B cell (primary cell): ENCODE measurements at regions of chr21 and their contacts with region 1.

Region 1: GRCh38 chr21:42233067-42233961 is 14.4 kb downstream of the ABCG1 start:
- DNase-seq: peak; percentile 91
- ATAC-seq: peak; percentile 56
- H3K4me3 ChIP-seq: peak overlapping the region; percentile 5 to 62 (median 16)
- H3K4me3 Mint-ChIP-seq: peak overlapping the region; percentile 82
- H3K27ac ChIP-seq: peak overlapping the region; percentile 93 to 98
- H3K27ac Mint-ChIP-seq: peak overlapping the region; percentile 93
- H3K4me1 ChIP-seq: peaks cover 78 to 92% of the 10 kb centered on the region in 2 donors
- H3K4me1 Mint-ChIP-seq: peaks cover 95% of the 10 kb centered on the region
- H3K27me3 ChIP-seq: no peaks in the 10 kb centered on the region
- H3K27me3 Mint-ChIP-seq: no peaks in the 10 kb centered on the region
- CTCF ChIP-seq: peak; percentile 69

Region 2: GRCh38 chr21:41879190-41879998 is 353.9 kb before region 1 on chr21 and contains the start of gene PRDM15:
- CTCF ChIA-PET with region 1: no interaction called
- POLR2A ChIA-PET with region 1: no interaction called
- intact Hi-C with region 1: loop called (anchors 2 kb)
- DNase-seq: peak; percentile 83
- ATAC-seq: peak; percentile 67
- H3K4me3 ChIP-seq: peak within 1 kb of the TSS; percentile 53 to 86 (median 81)
- H3K4me3 Mint-ChIP-seq: peak within 1 kb of the TSS; percentile 94
- H3K27ac ChIP-seq: peak within 1 kb of the TSS; percentile 76 to 80
- H3K27ac Mint-ChIP-seq: peak within 1 kb of the TSS; percentile 97
- H3K4me1 ChIP-seq: peaks cover 13 to 21% of the 10 kb centered on the region in 2 donors
- H3K4me1 Mint-ChIP-seq: peaks cover 35% of the 10 kb centered on the region
- H3K27me3 ChIP-seq: no peaks in the 10 kb centered on the region
- H3K27me3 Mint-ChIP-seq: no peaks in the 10 kb centered on the region
- CTCF ChIP-seq: no peak
- total RNA-seq, gene PRDM15: 20.7 and 21.3 TPM in 2 replicates

Region 3: DNA sequence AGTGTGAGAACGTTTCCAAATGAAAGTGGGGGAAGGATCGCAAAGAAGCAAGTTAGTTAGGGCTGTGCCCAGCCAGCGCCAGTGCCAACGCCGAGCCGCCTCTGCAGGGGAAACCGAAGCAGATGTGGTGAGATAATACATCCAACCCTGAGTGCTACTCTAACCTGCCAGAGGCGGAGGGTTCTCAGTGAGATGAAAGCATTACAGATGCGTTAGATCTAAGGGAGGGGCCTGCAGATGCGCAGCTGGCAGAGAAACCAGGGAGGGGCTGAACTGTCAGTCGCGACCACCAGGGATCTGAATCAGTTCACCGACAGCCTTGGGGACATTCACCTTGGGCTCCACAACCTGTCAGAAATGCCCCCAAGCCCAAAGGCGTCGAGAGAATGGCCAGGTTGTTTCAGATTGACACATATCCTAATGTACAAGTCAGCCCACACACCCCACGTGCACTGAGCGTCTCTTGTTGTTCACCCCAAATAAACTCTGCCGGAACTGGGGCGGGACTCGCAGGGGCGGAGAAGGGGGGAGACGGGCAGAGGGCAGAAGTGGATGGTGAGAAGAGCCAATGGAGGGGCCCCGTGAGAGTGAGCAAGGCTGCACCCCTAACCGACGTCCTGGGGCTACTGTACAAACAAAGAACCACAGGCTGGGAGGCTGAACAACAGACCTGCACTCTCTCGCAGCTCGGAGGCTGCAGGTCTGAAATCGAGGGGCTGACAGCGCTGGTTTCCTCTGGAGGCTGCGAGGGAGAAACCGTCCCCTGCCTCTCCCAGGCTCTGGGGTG is 170.9 kb before region 1 on chr21:
- CTCF ChIA-PET with region 1: no interaction called
- POLR2A ChIA-PET with region 1: no interaction called
- intact Hi-C with region 1: loop called (anchors 1 kb)
- DNase-seq: peak; percentile 94
- ATAC-seq: peak; percentile 73
- H3K4me3 ChIP-seq: peak overlapping the region; percentile 3 to 79 (median 65)
- H3K4me3 Mint-ChIP-seq: peak overlapping the region; percentile 91
- H3K27ac ChIP-seq: peak overlapping the region; percentile 87 to 96
- H3K27ac Mint-ChIP-seq: peak overlapping the region; percentile 99
- H3K4me1 ChIP-seq: peaks cover 64 to 95% of the 10 kb centered on the region in 2 donors
- H3K4me1 Mint-ChIP-seq: peaks cover 82% of the 10 kb centered on the region
- H3K27me3 ChIP-seq: no peaks in the 10 kb centered on the region
- H3K27me3 Mint-ChIP-seq: no peaks in the 10 kb centered on the region
- CTCF ChIP-seq: no peak

Region 4: GRCh38 chr21:42187976-42188653 is 45.2 kb before region 1 on chr21:
- CTCF ChIA-PET with region 1: interaction called, 5 read pairs
- POLR2A ChIA-PET with region 1: interaction called, 3 read pairs
- intact Hi-C with region 1: loop called (anchors 1 kb)
- DNase-seq: peak; percentile 85
- ATAC-seq: peak; percentile 97
- H3K4me3 ChIP-seq: peak overlapping the region in 3 of 5 experiments; percentile 11 to 32 (median 28)
- H3K4me3 Mint-ChIP-seq: peak overlapping the region; percentile 69
- H3K27ac ChIP-seq: peak overlapping the region; percentile 78 to 81
- H3K27ac Mint-ChIP-seq: peak overlapping the region; percentile 91
- H3K4me1 ChIP-seq: peaks cover 35 to 50% of the 10 kb centered on the region in 2 donors
- H3K4me1 Mint-ChIP-seq: peaks cover 50% of the 10 kb centered on the region
- H3K27me3 ChIP-seq: no peaks in the 10 kb centered on the region
- H3K27me3 Mint-ChIP-seq: no peaks in the 10 kb centered on the region
- CTCF ChIP-seq: no peak

Region 5: DNA sequence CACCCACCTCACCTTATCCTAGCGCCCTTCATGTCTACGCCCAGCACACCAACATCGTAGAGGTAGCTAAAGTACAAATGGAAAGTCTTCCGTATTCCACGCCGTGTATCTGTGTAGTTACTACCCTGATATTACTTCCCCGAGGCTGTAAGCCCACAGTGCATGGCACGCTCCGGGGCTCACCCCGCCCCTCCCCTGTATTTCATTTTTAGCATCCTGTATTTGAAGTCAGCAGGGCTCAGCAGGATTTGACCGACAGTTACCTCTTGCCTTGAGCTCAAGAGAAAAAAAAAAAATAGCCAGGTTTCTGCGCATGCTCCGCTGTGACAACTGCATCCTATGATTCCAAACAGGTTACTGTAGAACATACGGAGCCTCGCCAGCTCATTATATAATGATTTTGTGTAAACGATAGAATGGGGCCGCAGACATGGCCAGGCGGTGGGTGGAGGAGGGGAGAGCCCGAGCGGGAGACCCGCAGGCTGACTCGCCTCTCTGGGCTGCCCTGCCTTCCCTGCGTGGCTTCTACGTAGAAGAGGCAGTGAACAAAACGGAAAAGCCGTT is 13.1 kb before region 1 on chr21:
- CTCF ChIA-PET with region 1: interaction called, 36 read pairs
- POLR2A ChIA-PET with region 1: interaction called, 23 read pairs
- intact Hi-C with region 1: loop called (anchors 1 kb)
- DNase-seq: peak; percentile 94
- ATAC-seq: peak; percentile 85
- H3K4me3 ChIP-seq: peak overlapping the region; percentile 72 to 92 (median 89)
- H3K4me3 Mint-ChIP-seq: peak overlapping the region; percentile 87
- H3K27ac ChIP-seq: peak overlapping the region; percentile 75 to 96
- H3K27ac Mint-ChIP-seq: peak overlapping the region; percentile 80
- H3K4me1 ChIP-seq: peaks cover 29 to 41% of the 10 kb centered on the region in 2 donors
- H3K4me1 Mint-ChIP-seq: peaks cover 47% of the 10 kb centered on the region
- H3K27me3 ChIP-seq: no peaks in the 10 kb centered on the region
- H3K27me3 Mint-ChIP-seq: no peaks in the 10 kb centered on the region
- CTCF ChIP-seq: no peak

Region 6: DNA sequence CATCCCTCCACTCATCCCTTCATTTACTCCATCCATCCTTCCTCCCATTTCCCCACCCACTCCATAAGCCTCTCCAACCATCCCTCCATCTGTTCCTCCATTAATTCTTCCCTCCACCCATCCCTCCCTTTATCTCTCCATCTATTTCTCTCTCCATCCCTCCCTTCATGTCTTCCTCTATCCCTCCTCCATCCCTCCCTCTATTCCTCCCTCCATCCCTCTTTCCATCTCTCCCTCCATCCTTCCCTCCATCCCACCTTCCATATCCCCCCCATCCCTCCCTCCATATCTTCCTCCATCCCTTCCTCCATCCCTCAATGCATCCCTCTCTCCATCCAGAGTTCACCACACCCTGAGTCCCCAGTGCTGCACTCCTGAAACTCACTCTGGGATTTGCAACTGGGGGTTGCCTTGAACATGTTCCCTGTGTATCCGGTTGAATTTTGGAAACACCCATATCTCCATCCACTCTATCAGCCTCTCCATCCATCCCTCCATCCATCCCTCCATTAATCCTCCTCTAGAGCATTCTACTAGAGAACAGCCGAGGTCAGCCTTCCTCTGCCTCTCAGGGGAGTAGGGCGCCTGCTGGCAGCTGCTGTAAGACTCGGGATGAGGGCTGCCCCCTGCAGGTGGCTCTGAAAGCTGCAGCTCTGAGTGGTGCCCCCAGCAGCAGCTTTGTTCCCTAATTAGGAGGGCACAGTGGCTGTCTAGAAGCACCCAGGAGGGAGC is 25.0 kb after region 1 on chr21:
- CTCF ChIA-PET with region 1: interaction called, 32 read pairs
- POLR2A ChIA-PET with region 1: interaction called, 5 read pairs
- intact Hi-C with region 1: no loop called
- DNase-seq: peak; percentile 85
- ATAC-seq: peak; percentile 96
- H3K4me3 ChIP-seq: no peak overlapping the region
- H3K4me3 Mint-ChIP-seq: no peak overlapping the region
- H3K27ac ChIP-seq: no peak overlapping the region
- H3K27ac Mint-ChIP-seq: no peak overlapping the region
- H3K4me1 ChIP-seq: peaks cover 37 to 53% of the 10 kb centered on the region in 2 donors
- H3K4me1 Mint-ChIP-seq: peaks cover 48% of the 10 kb centered on the region
- H3K27me3 ChIP-seq: peaks cover 0 to 3% (median 0%) of the 10 kb centered on the region in 4 experiments
- H3K27me3 Mint-ChIP-seq: no peaks in the 10 kb centered on the region
- CTCF ChIP-seq: peak; percentile 89

Region 7: DNA sequence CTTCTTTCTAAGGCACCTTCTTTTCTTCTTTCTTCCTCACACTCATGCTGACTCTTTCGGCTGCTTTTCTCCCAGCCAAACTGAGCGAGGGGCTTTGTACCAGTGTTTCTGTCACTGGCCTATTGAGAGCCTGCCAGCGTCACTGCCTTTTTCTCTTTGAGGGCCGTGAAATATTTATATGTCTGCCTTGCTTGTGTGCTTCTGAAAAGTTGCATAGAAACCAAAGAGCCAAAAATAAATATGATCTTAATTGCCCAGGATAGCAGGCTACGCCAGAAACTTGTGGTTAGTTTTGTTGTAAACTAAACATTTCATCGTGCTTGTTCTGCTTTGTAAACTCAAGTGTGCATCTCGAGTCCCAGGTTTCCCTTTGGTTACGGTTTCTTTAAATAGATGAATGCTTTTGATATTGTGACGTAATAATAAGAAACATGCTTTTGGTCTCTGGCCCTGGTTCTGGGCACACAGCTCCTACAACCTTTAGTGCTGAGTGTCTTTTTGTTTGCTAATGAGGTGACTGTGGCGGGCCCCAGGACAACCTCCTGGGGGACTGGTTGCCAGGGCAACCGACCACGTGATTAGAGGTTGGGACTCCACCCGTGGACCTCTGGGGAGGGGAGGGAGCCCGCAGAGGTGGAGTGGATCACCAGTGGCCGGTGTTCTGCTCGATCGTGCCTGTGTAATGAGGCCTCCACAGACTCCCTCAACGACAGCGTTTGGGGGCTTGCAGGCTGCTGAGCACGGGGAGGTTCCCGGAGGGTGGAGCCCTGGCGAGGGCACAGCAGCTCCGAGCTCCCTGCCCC is 291.2 kb after region 1 on chr21:
- CTCF ChIA-PET with region 1: no interaction called
- POLR2A ChIA-PET with region 1: no interaction called
- intact Hi-C with region 1: loop called (anchors 1 kb)
- DNase-seq: peak; percentile 96
- ATAC-seq: peak; percentile 85
- H3K4me3 ChIP-seq: peak overlapping the region in 4 of 5 experiments; percentile 29 to 65 (median 41)
- H3K4me3 Mint-ChIP-seq: peak overlapping the region; percentile 88
- H3K27ac ChIP-seq: peak overlapping the region; percentile 97 to 99
- H3K27ac Mint-ChIP-seq: peak overlapping the region; percentile 99
- H3K4me1 ChIP-seq: peaks cover 54 to 59% of the 10 kb centered on the region in 2 donors
- H3K4me1 Mint-ChIP-seq: peaks cover 78% of the 10 kb centered on the region
- H3K27me3 ChIP-seq: no peaks in the 10 kb centered on the region
- H3K27me3 Mint-ChIP-seq: no peaks in the 10 kb centered on the region
- CTCF ChIP-seq: no peak